HEK293T (cell line): ENCODE measurements at regions of chr19 and their contacts with region 1.

Region 1: GRCh38 chr19:49850473-49851342 is at the start of gene PTOV1:
- DNase-seq: peak; percentile 99

Region 2: DNA sequence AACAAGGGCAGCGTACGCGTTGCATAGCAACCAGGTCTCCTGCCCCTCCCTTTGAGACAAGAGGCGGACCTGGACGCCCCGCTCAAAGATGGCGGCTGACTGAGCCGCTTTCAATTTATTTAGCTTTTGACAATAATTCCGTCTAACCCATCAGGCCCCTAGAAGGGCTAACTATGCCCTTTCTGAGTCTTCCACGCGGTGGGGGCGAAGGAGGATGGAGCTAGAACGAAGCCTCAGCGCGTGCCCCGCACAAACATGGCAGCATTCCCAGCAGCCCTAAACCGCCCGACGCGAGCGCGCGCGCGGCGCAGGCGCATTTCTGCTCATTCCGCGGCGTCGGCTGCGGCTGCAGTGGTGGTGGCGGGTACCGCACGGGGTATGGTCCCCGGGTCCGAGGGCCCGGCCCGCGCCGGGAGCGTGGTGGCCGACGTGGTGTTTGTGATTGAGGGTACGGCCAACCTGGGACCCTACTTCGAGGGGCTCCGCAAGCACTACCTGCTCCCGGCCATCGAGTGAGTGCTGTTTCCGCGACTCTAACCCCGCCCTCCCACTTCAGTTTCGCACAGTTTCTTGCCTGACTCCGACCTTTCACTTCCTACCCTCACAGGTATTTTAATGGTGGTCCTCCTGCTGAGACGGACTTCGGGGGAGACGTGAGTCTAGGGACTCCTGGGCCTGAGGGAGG is 32.6 kb before region 1 on chr19 and contains the start of gene MED25:
- CTCF ChIA-PET with region 1: no interaction called
- POLR2A ChIA-PET with region 1: interaction called, 41 read pairs
- DNase-seq: peak; percentile 90

Region 3: DNA sequence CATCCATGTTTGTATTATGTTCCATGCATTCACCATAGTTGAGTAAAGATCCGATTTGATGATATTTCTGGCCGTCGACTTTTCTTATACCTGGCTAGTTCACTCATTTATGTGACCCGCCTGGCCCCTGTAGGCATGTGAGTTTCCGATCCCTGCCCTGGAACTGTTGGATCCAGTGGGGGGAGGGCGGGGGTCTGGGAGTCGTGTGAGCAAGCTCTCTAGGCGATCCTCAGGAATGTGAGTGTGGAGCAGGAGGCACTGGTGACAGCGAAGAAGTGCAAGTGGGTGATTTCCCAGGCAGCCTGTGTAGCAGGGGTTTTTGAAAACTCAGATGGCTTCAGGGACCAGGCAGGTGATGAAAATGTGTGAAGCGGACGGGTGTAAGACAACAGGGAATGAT is 10.4 kb before region 1 on chr19:
- CTCF ChIA-PET with region 1: no interaction called
- POLR2A ChIA-PET with region 1: no interaction called
- DNase-seq: no peak

Region 4: GRCh38 chr19:49869441-49870176 is 18.9 kb after region 1 on chr19:
- CTCF ChIA-PET with region 1: no interaction called
- POLR2A ChIA-PET with region 1: interaction called, 69 read pairs
- DNase-seq: peak; percentile 82

Region 5: GRCh38 chr19:49882665-49883064 is 32.0 kb after region 1 on chr19:
- CTCF ChIA-PET with region 1: no interaction called
- POLR2A ChIA-PET with region 1: no interaction called
- DNase-seq: no peak